Dorsolateral prefrontal cortex (tissue), 120 donors: ENCODE measurements at regions of chr6 and their contacts with region 1.

Region 1: GRCh38 chr6:6610031-6610591 is 21.6 kb downstream of the LY86 start:
- DNase-seq: no peak
- H3K4me3 ChIP-seq: no peak overlapping the region
- H3K27ac ChIP-seq: no peak overlapping the region
- H3K27me3 ChIP-seq: no peaks in the 10 kb centered on the region
- CTCF ChIP-seq: no peak

Region 2: GRCh38 chr6:6556738-6557505 is 53.2 kb before region 1 on chr6:
- intact Hi-C with region 1: loop called in 1 of 2 experiments (anchors 5 kb)
- DNase-seq: peak in 1 of 10 donors; percentile 45
- H3K4me3 ChIP-seq: no peak overlapping the region
- H3K27ac ChIP-seq: peak overlapping the region in 45 of 59 donors; percentile 3 to 87 (median 63)
- H3K27me3 ChIP-seq: peaks cover 0 to 5% (median 0%) of the 10 kb centered on the region in 45 donors
- CTCF ChIP-seq: peak in 55 of 56 donors; percentile 36 to 76 (median 64)

Region 3: GRCh38 chr6:6622501-6622900 is 12.4 kb after region 1 on chr6:
- intact Hi-C with region 1: loop called in 1 of 2 experiments (anchors 1 kb)
- DNase-seq: no peak
- H3K4me3 ChIP-seq: peak overlapping the region in 43 of 59 donors; percentile 0 to 54 (median 33)
- H3K27ac ChIP-seq: peak overlapping the region in 52 of 59 donors; percentile 2 to 87 (median 62)
- H3K27me3 ChIP-seq: no peaks in the 10 kb centered on the region
- CTCF ChIP-seq: no peak

Region 4: GRCh38 chr6:6633898-6634734 is 24.0 kb after region 1 on chr6:
- intact Hi-C with region 1: no loop called
- DNase-seq: no peak
- H3K4me3 ChIP-seq: no peak overlapping the region
- H3K27ac ChIP-seq: no peak overlapping the region
- H3K27me3 ChIP-seq: peaks cover 0 to 3% (median 0%) of the 10 kb centered on the region in 45 donors
- CTCF ChIP-seq: no peak